ENCODE measurements at regions of chr4 and their contacts with region 1.

Region 1: DNA sequence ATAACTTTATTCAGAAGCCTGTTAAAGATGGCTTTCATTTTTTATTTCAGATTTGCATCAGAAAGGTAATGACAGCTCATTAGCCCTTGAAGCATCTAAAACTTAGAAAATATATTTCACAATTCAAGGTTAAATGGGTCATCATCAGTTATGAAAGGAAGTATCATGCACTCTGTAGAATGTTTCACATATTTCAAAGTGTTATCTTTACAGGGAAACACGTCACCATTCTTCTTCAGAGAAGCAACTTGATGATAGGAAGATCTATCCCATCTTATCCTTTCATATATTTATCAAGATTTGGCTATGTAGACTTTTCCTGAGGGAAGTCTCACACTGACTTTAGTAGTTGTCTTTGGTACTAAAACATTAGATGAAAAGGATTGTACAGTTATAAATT is 277.8 kb downstream of the TENM3 start:
- DNase-seq: no peak
- ATAC-seq: no peak
- H3K4me3 ChIP-seq: no peak overlapping the region
- H3K4me3 Mint-ChIP-seq: no peak overlapping the region
- H3K27ac ChIP-seq: no peak overlapping the region
- H3K27ac Mint-ChIP-seq: no peak overlapping the region
- H3K4me1 ChIP-seq: no peaks in the 10 kb centered on the region
- H3K4me1 Mint-ChIP-seq: no peaks in the 10 kb centered on the region
- H3K27me3 ChIP-seq: no peaks in the 10 kb centered on the region
- H3K27me3 Mint-ChIP-seq: peaks cover 0 to 28% (median 5%) of the 10 kb centered on the region in 5 donors

Region 2: DNA sequence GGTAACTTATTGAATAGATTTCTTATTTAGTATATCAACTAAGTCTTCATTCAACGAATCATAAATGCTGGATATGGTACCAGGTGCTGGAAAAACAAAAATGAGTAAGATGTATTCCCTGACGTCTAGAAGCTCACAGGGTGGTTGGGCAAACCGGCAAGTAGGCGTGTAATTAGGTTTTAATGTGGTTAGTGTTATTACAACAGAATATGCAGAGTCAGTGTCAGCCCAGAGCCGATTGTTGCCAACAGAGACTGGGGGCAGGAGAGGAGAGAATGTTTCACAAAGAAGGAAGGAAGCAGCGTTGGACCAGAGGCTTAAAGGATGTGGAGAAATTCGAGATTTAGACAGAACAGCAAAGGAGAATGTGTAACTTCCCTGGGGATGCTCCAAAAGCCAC is 166.1 kb before region 1 on chr4:
- CTCF ChIA-PET with region 1: no interaction called
- POLR2A ChIA-PET with region 1: no interaction called
- intact Hi-C with region 1: no loop called
- DNase-seq: no peak
- ATAC-seq: no peak
- H3K4me3 ChIP-seq: no peak overlapping the region
- H3K4me3 Mint-ChIP-seq: no peak overlapping the region
- H3K27ac ChIP-seq: no peak overlapping the region
- H3K27ac Mint-ChIP-seq: no peak overlapping the region
- H3K4me1 ChIP-seq: no peaks in the 10 kb centered on the region
- H3K4me1 Mint-ChIP-seq: no peaks in the 10 kb centered on the region
- H3K27me3 ChIP-seq: no peaks in the 10 kb centered on the region
- H3K27me3 Mint-ChIP-seq: peaks cover 0 to 3% (median 0%) of the 10 kb centered on the region in 5 donors

Region 3: GRCh38 chr4:183106839-183107238 is 585.8 kb after region 1 on chr4:
- CTCF ChIA-PET with region 1: no interaction called
- POLR2A ChIA-PET with region 1: no interaction called
- intact Hi-C with region 1: loop called in 1 of 2 experiments (anchors 5 kb)
- DNase-seq: no peak
- ATAC-seq: no peak
- H3K4me3 ChIP-seq: no peak overlapping the region
- H3K4me3 Mint-ChIP-seq: no peak overlapping the region
- H3K27ac ChIP-seq: no peak overlapping the region
- H3K27ac Mint-ChIP-seq: no peak overlapping the region
- H3K4me1 ChIP-seq: no peaks in the 10 kb centered on the region
- H3K4me1 Mint-ChIP-seq: peaks cover 0 to 17% (median 5%) of the 10 kb centered on the region in 7 donors
- H3K27me3 ChIP-seq: peaks cover 0 to 4% of the 10 kb centered on the region in 2 donors
- H3K27me3 Mint-ChIP-seq: peaks cover 0 to 23% (median 0%) of the 10 kb centered on the region in 5 donors

Measured in naive thymus-derived CD4-positive, alpha-beta T cell (primary cell).